Caco-2 (cell line): ENCODE measurements at regions of chrX and their contacts with region 1.

Region 1: DNA sequence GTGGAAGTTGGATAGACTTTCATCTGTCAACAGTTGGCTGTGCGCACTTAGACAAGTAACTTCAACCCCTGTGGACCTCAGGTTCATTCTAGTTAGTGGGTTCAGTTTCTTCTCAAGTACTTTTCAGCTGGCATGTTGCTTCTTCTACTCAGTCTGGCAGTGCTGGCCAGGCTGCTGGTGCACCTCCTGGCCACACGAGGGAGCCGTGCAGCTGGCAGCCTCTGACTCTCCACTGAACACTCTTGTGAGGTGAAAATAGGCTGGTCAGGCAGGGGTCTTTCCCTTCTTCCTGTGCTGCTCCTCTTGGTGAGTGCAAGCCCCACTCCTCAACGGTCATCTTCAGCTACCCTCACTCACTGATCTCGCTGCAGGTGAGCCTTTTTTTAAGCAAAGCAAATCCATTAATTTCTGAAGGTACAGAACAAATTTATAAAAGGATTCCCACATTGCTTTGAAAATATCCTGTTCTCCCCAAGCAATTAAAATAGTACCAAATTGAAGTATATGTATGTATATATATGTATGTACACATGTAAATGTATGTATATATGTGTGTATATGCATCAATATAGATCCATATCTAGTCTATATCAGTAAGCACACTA is 30.6 kb downstream of the LONRF3 start:
- DNase-seq: peak; percentile 42 to 58
- H3K4me3 ChIP-seq: no peak overlapping the region
- H3K4me3 Mint-ChIP-seq: no peak overlapping the region
- H3K27ac Mint-ChIP-seq: no peak overlapping the region
- H3K4me1 ChIP-seq: peaks cover 6% of the 10 kb centered on the region; the same call in 1 of the 2 replicates
- H3K4me1 Mint-ChIP-seq: no peaks in the 10 kb centered on the region
- H3K27me3 ChIP-seq: no peaks in the 10 kb centered on the region
- H3K27me3 Mint-ChIP-seq: peaks cover 2% of the 10 kb centered on the region
- CTCF ChIP-seq: peak; percentile 68 to 88

Region 2: GRCh38 chrX:118847676-118848075 is 157.3 kb before region 1 on chrX:
- CTCF ChIA-PET with region 1: interaction called, 3 read pairs
- POLR2A ChIA-PET with region 1: no interaction called
- intact Hi-C with region 1: loop called (anchors 1 kb)
- DNase-seq: peak in 1 of 2 experiments; percentile 43
- H3K4me3 ChIP-seq: no peak overlapping the region
- H3K4me3 Mint-ChIP-seq: no peak overlapping the region
- H3K27ac Mint-ChIP-seq: no peak overlapping the region
- H3K4me1 ChIP-seq: no peaks in the 10 kb centered on the region
- H3K4me1 Mint-ChIP-seq: no peaks in the 10 kb centered on the region
- H3K27me3 ChIP-seq: no peaks in the 10 kb centered on the region
- H3K27me3 Mint-ChIP-seq: peaks cover 2% of the 10 kb centered on the region
- CTCF ChIP-seq: peak; percentile 34 to 49

Region 3: DNA sequence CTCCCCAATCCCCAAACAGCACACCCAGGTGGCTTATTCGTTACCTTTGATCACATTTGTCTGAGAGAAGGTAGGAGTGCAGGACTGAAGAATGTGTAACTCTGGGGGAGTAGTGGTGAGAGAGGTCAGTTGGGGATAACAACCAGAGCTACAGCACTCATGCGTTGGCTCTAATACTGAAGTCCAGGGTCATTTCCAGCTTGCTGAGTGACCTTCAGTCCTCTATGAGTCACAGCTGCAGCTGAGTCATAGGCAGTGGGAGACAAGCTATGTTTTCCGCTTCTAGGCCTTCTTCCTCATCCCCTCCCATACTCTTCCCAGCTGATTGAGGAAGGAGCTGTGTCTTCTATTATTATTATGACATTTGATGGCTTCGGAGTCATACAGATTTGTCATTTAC is 36.2 kb after region 1 on chrX:
- CTCF ChIA-PET with region 1: no interaction called
- POLR2A ChIA-PET with region 1: no interaction called
- intact Hi-C with region 1: loop called (anchors 5 kb)
- DNase-seq: no peak
- H3K4me3 ChIP-seq: no peak overlapping the region
- H3K4me3 Mint-ChIP-seq: no peak overlapping the region
- H3K27ac Mint-ChIP-seq: no peak overlapping the region
- H3K4me1 ChIP-seq: no peaks in the 10 kb centered on the region
- H3K4me1 Mint-ChIP-seq: no peaks in the 10 kb centered on the region
- H3K27me3 ChIP-seq: no peaks in the 10 kb centered on the region
- H3K27me3 Mint-ChIP-seq: no peaks in the 10 kb centered on the region
- CTCF ChIP-seq: no peak

Region 4: DNA sequence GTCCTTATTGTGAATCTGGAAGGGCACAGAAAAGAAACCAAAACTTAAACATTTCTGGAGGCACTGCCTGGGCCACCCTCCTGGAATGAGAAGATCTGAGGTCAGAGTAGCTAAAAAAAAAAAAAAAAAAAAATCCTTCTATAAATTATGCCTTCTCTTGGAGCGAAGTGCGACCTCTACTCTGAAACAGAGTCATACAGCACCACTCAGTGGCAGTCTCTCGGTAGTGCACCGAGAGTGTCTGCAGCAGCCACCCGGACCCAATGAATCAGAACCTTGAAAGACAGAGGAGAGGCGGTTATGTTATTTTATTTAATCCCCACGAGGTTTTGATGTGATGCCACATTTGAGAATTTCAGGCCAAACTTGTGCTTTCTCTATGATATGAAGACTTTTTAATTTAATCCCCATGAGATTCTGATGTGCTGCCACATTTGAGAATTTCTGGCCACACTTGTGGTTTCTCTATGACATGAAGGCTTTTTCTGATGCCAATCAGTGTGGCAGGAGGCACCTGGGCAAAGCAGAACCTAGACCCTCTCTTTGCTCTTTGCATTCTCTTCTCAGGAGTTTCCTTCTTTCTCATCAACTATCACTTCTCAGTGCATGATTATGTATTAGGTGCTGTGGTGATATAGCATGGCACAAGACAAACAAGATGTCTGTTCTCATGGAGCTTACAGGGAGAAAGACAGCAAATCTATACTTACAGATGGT is 62.2 kb after region 1 on chrX:
- CTCF ChIA-PET with region 1: no interaction called
- POLR2A ChIA-PET with region 1: no interaction called
- intact Hi-C with region 1: loop called (anchors 1 kb)
- DNase-seq: peak; percentile 35 to 52
- H3K4me3 ChIP-seq: no peak overlapping the region
- H3K4me3 Mint-ChIP-seq: no peak overlapping the region
- H3K27ac Mint-ChIP-seq: no peak overlapping the region
- H3K4me1 ChIP-seq: no peaks in the 10 kb centered on the region
- H3K4me1 Mint-ChIP-seq: no peaks in the 10 kb centered on the region
- H3K27me3 ChIP-seq: no peaks in the 10 kb centered on the region
- H3K27me3 Mint-ChIP-seq: peaks cover 2% of the 10 kb centered on the region
- CTCF ChIP-seq: peak; percentile 44 to 67